Posterior vena cava (tissue), 2 donors: ENCODE measurements at regions of chr16 and their contacts with region 1.

Region 1: DNA sequence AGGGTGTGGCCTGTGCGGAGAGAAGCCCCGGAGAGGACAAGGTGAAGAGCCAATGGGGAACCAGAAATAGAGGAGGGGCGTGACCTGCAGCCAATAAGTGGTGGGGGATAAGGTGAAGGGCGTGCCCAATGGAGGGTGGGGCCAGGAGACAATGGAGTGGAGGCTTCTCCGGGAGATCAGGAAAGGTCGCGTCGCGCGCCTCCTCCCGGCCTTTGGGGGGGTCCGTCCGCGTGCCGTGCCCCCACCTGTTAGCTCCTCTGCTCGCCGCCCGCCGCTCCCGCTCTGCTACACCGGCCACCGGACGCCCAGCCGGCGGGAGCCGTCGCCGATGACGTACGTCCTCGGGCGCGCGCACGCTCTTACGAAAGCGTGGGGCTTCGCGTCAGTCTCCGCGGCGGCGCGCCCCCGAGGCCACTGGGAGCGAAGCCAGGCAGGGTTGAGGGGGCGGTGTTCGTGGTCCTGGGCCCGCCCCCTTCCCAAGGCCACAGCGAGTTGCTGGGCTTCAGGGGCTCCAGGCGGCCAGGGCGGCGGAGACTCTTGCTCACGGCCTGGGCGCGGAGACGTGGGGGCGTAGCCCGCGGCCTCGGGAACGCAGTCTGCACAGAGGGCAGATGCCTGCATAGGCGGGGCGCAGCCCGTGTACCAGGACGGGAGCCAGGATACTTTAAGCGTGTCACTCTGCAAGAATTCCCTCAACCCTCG is at the start of gene MATCAP1:
- DNase-seq: peak; percentile 97
- total RNA-seq, gene MATCAP1: 18.3 to 22.1 TPM

Region 2: GRCh38 chr16:66961065-66961744 is 222.6 kb before region 1 on chr16 and contains the start of gene CES3:
- intact Hi-C with region 1: loop called in 1 of 2 experiments (anchors 2 kb)
- DNase-seq: no peak
- total RNA-seq, gene CES3: 0.10 to 1.3 TPM

Region 3: DNA sequence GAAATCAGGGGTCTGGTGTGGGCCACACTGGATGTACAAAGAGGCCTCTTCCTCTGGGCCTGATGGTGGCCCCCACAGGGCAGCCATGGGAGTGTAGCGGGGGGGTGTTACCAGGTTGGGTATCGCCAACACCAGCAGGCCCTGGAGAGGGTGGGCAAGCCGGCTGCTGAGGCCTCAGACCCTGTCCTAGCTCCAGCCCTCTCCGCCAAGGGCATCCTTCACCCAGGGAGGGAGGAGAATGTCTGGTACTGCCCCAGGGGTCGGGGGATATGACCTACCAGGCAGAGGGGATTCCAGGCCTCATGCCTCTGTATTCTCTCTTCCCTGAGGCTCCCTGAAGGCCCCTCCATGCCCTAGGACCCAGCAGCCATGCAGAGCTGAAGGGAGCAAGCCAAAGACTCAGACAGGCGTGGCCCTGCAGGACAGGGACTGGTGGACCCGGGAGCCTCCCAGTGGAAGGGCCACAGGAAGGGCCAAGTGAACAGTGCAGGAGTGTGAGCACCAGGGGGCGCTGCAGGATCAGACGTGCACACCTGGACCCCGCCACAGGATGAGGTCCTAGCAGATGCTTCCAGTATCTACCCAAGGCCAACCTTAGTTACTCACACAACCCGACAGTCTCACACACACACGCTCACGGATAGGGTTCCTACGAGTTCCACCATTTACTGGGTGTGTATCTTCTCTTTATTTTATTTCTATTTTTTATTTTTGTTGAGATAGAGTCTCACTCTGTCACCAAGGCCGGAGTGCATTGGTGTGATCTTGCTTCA is 206.3 kb before region 1 on chr16:
- intact Hi-C with region 1: loop called in 1 of 2 experiments (anchors 10 kb)
- DNase-seq: peak; percentile 96